Mammary epithelial cell (primary cell): ENCODE measurements at regions of chr3 and their contacts with region 1.

Region 1: DNA sequence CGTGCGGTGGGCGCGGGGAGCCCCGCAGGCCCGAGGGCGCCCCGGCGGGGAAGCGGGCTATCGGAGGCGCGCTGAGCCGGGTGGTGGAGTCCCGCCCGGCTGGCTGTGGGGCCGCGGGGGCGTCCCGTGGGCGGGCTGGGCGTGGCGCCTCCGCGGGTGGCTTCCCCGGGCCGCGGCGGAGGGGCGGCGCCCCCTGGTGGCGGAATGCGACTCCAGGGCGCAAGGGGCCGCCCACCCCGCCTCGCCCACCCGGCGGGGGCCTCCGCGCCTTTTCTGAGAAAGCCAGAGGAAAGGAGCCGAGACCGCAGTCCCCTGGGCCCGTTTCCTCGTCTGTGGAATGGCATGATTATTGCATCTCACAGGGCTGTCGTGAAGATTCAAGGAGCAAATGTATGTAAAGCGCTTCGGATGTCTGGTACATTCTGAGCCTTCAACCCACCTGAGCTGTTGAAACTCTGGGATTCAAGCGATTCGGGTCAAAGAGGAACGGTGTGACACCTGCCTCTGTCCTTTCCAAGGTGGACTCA is 31.9 kb upstream of the RAB6B start:
- DNase-seq: no peak
- H3K4me3 ChIP-seq: peak overlapping the region in 2 of 3 experiments; percentile 17 to 46
- H3K27ac ChIP-seq: no peak overlapping the region
- H3K4me1 ChIP-seq: peaks cover 10% of the 10 kb centered on the region
- H3K27me3 ChIP-seq: peaks cover 10% of the 10 kb centered on the region
- CTCF ChIP-seq: peak; percentile 37 to 59

Region 2: GRCh38 chr3:132722164-132723024 is 1205.2 kb before region 1 on chr3 and contains the start of gene NPHP3:
- CTCF ChIA-PET with region 1: no interaction called
- dilution Hi-C with region 1: no loop called
- in situ Hi-C with region 1: loop called in 1 of 2 experiments (anchors 25 kb)
- intact Hi-C with region 1: loop called (anchors 2 kb)
- DNase-seq: peak; percentile 92
- H3K4me3 ChIP-seq: peak within 1 kb of the TSS; percentile 80 to 96 (median 94)
- H3K27ac ChIP-seq: peak within 1 kb of the TSS; percentile 68
- H3K4me1 ChIP-seq: peaks cover 4% of the 10 kb centered on the region
- H3K27me3 ChIP-seq: no peaks in the 10 kb centered on the region
- CTCF ChIP-seq: no peak
- total RNA-seq, gene NPHP3: 22.8 to 24.5 TPM

Region 3: DNA sequence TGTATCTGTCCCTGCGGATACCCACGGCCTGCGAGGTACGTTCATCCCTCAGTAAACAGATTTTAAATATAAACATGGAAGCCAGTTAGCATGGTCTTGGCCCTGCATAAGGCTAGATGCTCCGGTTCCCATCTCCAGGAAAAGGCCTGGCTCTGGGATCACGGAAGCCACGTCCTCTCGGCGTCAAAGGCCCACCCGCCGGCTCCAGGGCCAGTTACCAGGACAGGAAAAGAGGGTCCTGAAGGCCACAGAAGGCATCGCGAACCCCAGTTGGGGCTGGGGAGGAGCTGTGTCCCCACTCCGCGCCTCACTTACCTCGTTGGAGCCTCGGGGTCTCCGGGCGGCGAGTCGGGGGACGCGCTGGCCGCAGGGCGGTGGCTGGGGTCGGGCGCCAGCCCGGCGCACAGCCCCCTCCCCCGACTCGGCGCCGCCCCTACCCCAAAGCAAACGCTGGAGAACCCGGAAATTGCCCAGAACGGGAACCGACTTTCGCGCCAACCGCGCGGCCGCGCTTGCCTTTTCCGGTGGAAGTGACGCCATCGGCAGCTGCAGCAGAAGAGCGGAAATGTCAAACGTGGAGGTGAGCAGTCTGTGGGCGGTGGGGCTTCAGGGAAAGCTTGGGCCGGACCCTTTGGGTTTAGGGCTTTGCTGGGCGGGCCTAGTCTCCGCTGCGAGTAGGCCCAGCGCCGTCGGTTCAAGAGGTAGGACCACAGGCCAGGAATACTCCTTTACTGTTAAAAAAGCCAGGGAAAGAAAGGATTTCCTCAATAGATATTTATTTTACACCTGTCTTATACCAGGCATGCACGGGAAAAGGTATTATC is 265.9 kb before region 1 on chr3 and contains the start of gene TOPBP1:
- CTCF ChIA-PET with region 1: interaction called, 3 read pairs
- dilution Hi-C with region 1: no loop called
- in situ Hi-C with region 1: loop called in 1 of 2 experiments (anchors 25 kb)
- intact Hi-C with region 1: loop called (anchors 2 kb)
- DNase-seq: peak; percentile 68
- H3K4me3 ChIP-seq: peak within 1 kb of the TSS; percentile 54 to 93 (median 90)
- H3K27ac ChIP-seq: peak within 1 kb of the TSS; percentile 86
- H3K4me1 ChIP-seq: peaks cover 27% of the 10 kb centered on the region
- H3K27me3 ChIP-seq: no peaks in the 10 kb centered on the region
- CTCF ChIP-seq: no peak
- total RNA-seq, gene TOPBP1: 23.9 to 25.8 TPM

Region 4: GRCh38 chr3:134039161-134039862 is 111.7 kb after region 1 on chr3:
- CTCF ChIA-PET with region 1: interaction called, 4 read pairs
- dilution Hi-C with region 1: no loop called
- in situ Hi-C with region 1: no loop called
- intact Hi-C with region 1: loop called (anchors 1 kb)
- DNase-seq: peak; percentile 43
- H3K4me3 ChIP-seq: no peak overlapping the region
- H3K27ac ChIP-seq: no peak overlapping the region
- H3K4me1 ChIP-seq: peaks cover 6% of the 10 kb centered on the region
- H3K27me3 ChIP-seq: no peaks in the 10 kb centered on the region
- CTCF ChIP-seq: peak; percentile 22 to 52

Region 5: DNA sequence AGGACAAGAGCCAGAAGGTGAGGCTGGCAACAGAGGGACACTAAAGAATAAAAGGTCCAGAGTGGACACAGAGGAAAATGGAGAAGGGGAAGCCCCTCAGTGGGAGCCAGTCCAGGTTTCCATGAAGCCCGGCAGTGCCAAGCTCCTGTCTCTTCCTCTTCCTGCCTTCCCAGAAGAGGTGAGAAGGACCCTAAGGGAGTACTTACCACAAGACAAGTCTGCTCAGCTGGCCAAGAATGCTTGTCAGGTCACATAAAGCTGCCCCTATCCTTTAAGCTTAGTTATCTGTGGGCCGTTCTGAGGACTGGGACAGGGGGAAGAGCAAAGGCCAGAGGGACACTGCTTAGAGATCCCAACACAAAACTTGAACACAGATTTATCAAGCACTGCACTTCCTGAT is 222.9 kb after region 1 on chr3:
- CTCF ChIA-PET with region 1: no interaction called
- dilution Hi-C with region 1: no loop called
- in situ Hi-C with region 1: no loop called
- intact Hi-C with region 1: loop called (anchors 5 kb)
- DNase-seq: no peak
- H3K4me3 ChIP-seq: no peak overlapping the region
- H3K27ac ChIP-seq: no peak overlapping the region
- H3K4me1 ChIP-seq: peaks cover 10% of the 10 kb centered on the region
- H3K27me3 ChIP-seq: no peaks in the 10 kb centered on the region
- CTCF ChIP-seq: no peak

Region 6: DNA sequence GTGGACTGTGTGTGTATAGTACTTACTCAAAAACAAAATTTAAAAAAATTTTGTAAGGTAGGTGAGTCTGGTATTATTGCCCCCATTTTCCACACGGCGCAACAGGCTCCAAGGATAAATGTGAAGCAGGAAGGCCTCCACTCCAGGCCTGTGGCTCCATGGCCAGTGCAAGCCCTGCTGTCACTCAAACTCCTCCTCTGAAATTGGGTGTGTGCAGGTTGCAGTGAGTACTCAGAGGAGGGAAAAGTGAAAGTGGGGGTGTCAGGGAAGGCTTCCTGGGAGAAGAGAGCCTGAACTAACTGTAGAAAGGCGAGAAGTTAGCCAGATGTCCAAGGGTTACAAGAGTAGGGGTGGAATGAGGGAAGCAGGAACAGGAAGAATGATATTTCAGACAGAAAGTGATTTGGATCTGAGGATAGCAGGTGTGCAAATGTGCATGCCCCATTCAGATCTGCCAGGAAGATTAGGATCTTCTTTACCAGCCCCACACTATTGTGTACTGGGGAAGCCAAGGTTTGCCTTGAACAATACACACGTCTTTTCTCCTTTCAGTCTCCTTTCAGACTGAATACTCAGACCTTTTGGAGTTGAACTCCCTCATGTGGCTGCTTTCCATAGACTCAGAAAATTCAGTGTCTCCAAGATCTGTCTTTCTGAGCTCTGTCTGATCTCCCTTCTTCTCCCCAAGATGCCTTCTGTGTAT is 371.7 kb after region 1 on chr3:
- CTCF ChIA-PET with region 1: no interaction called
- dilution Hi-C with region 1: no loop called
- in situ Hi-C with region 1: loop called in 1 of 2 experiments (anchors 25 kb)
- intact Hi-C with region 1: loop called (anchors 1 kb)
- DNase-seq: peak; percentile 27
- H3K4me3 ChIP-seq: no peak overlapping the region
- H3K27ac ChIP-seq: no peak overlapping the region
- H3K4me1 ChIP-seq: peaks cover 3% of the 10 kb centered on the region
- H3K27me3 ChIP-seq: no peaks in the 10 kb centered on the region
- CTCF ChIP-seq: peak; percentile 10 to 62

Region 7: GRCh38 chr3:134473868-134474546 is 546.4 kb after region 1 on chr3:
- CTCF ChIA-PET with region 1: no interaction called
- dilution Hi-C with region 1: loop called (anchors 25 kb)
- in situ Hi-C with region 1: loop called (anchors 25 kb)
- intact Hi-C with region 1: loop called (anchors 5 kb)
- DNase-seq: peak; percentile 82
- H3K4me3 ChIP-seq: no peak overlapping the region
- H3K27ac ChIP-seq: peak overlapping the region; percentile 49
- H3K4me1 ChIP-seq: peaks cover 58% of the 10 kb centered on the region
- H3K27me3 ChIP-seq: no peaks in the 10 kb centered on the region
- CTCF ChIP-seq: peak; percentile 60 to 70